Psoas muscle (tissue), 8 donors: ENCODE measurements at regions of chr11 and their contacts with region 1.

Region 1: DNA sequence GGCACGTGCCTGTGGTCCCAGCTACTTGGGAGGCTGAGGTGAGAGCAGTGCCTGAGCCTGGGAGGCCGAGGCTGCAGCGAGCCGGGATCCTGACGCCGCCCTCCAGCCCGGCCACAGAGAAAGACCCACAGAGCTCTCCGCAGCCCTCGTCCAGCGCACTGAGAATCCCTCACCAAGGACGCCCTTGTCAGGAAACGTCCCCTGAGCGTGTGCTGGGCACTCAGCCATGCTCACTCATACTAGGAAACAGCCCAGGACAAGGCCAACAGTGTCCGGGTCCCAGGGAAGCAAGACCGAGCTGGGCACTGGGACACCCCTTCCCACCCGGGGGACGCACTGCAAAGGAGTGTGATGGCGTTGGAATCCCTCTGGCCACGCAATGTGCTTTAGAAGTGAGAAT is 14.5 kb downstream of the DEAF1 start:
- DNase-seq: no peak
- ATAC-seq: peak in 2 of 4 donors; percentile 22 to 40
- H3K4me3 ChIP-seq: no peak overlapping the region
- H3K27ac ChIP-seq: no peak overlapping the region
- H3K4me1 ChIP-seq: no peaks in the 10 kb centered on the region
- H3K27me3 ChIP-seq: no peaks in the 10 kb centered on the region
- CTCF ChIP-seq: no peak

Region 2: GRCh38 chr11:636452-637235 is 43.8 kb before region 1 on chr11:
- intact Hi-C with region 1: loop called in 1 of 2 experiments (anchors 5 kb)
- DNase-seq: peak in 1 of 2 donors; percentile 49
- ATAC-seq: peak in 3 of 4 donors; percentile 16 to 30 (median 21)
- H3K4me3 ChIP-seq: peak overlapping the region; percentile 44
- H3K27ac ChIP-seq: no peak overlapping the region
- H3K4me1 ChIP-seq: peaks cover 20% of the 10 kb centered on the region
- H3K27me3 ChIP-seq: peaks cover 0 to 20% (median 18%) of the 10 kb centered on the region in 3 donors
- CTCF ChIP-seq: no peak

Region 3: GRCh38 chr11:1138093-1138492 is 457.6 kb after region 1 on chr11:
- intact Hi-C with region 1: no loop called
- DNase-seq: no peak
- ATAC-seq: no peak
- H3K4me3 ChIP-seq: no peak overlapping the region
- H3K27ac ChIP-seq: no peak overlapping the region
- H3K4me1 ChIP-seq: no peaks in the 10 kb centered on the region
- H3K27me3 ChIP-seq: peaks cover 0 to 33% (median 0%) of the 10 kb centered on the region in 3 donors
- CTCF ChIP-seq: no peak